ENCODE measurements at regions of chr22 and their contacts with region 1.

Region 1: GRCh38 chr22:32528984-32529982 is 54.7 kb downstream of the FBXO7 start:
- DNase-seq: peak; percentile 76
- H3K4me3 Mint-ChIP-seq: no peak overlapping the region
- H3K27ac Mint-ChIP-seq: no peak overlapping the region
- H3K4me1 Mint-ChIP-seq: peaks cover 26% of the 10 kb centered on the region
- H3K27me3 Mint-ChIP-seq: no peaks in the 10 kb centered on the region
- CTCF ChIP-seq: peak; percentile 85

Region 2: DNA sequence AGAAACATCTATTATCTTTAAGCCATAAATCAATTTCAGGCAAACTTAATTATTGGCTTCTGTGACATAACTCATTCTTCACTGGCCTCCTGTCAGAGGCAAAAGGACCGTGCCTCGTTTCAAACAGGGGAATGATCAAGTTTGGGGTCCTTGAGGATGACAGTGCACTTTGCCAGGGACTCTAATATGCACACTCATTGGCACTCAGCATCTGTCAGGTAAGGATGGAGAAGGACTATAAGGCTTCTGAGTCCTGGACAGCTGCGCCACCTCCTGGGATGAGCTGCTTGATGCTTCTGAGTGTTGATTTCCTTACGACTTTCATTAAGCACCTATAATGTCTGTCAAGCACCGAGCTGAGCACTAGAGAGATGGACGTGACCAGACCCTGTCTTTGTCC is 85.2 kb before region 1 on chr22:
- CTCF ChIA-PET with region 1: no interaction called
- POLR2A ChIA-PET with region 1: no interaction called
- intact Hi-C with region 1: no loop called
- DNase-seq: peak; percentile 25
- H3K4me3 Mint-ChIP-seq: no peak overlapping the region
- H3K27ac Mint-ChIP-seq: no peak overlapping the region
- H3K4me1 Mint-ChIP-seq: peaks cover 4% of the 10 kb centered on the region
- H3K27me3 Mint-ChIP-seq: no peaks in the 10 kb centered on the region
- CTCF ChIP-seq: peak; percentile 31

Region 3: GRCh38 chr22:32501836-32502745 is 27.2 kb before region 1 on chr22:
- CTCF ChIA-PET with region 1: no interaction called
- POLR2A ChIA-PET with region 1: no interaction called
- intact Hi-C with region 1: no loop called
- DNase-seq: no peak
- H3K4me3 Mint-ChIP-seq: no peak overlapping the region
- H3K27ac Mint-ChIP-seq: no peak overlapping the region
- H3K4me1 Mint-ChIP-seq: no peaks in the 10 kb centered on the region
- H3K27me3 Mint-ChIP-seq: no peaks in the 10 kb centered on the region
- CTCF ChIP-seq: no peak

Region 4: GRCh38 chr22:32518848-32519247 is 10.4 kb before region 1 on chr22:
- CTCF ChIA-PET with region 1: interaction called, 30 read pairs
- POLR2A ChIA-PET with region 1: no interaction called
- intact Hi-C with region 1: no loop called
- DNase-seq: peak; percentile 18
- H3K4me3 Mint-ChIP-seq: no peak overlapping the region
- H3K27ac Mint-ChIP-seq: no peak overlapping the region
- H3K4me1 Mint-ChIP-seq: no peaks in the 10 kb centered on the region
- H3K27me3 Mint-ChIP-seq: no peaks in the 10 kb centered on the region
- CTCF ChIP-seq: no peak

Region 5: DNA sequence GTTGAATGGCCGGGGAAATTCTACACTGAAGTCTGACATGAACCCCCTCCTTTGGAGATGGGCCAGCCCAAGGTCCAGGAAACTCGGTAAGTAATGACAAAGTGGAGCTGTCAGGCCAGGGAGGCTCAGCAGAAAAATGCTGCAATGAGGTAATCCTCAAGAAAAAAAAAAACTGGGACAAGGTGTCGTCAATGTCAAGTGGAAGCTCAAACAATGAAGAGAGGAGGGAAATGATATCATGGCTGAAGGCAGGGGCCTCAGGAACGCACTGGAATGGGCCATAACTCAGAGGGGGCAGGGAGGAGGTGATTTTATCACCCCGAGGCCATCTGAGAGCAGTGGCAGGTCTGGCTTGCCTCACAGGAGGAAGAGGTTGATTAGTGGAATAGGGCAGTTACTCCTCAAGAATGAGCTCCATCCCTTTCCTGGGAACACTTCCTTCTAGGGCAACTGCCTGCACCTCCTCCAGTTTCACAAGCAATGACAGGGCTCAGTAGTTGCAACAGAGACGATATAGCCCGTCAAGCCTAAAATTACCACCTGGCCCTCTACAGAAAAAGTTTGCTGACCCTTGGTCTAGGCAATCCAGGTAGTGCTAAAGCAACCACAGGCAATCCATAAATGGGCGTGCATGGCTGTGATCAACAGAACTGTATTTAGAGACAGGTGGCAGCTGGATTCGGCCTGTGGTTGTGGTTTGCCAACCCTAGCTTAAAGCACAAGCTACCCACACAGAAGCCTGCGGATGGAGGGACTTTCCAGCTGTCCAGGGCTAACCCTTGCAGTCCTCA is 10.5 kb after region 1 on chr22:
- CTCF ChIA-PET with region 1: interaction called, 12 read pairs
- POLR2A ChIA-PET with region 1: no interaction called
- intact Hi-C with region 1: no loop called
- DNase-seq: no peak
- H3K4me3 Mint-ChIP-seq: no peak overlapping the region
- H3K27ac Mint-ChIP-seq: no peak overlapping the region
- H3K4me1 Mint-ChIP-seq: peaks cover 6% of the 10 kb centered on the region
- H3K27me3 Mint-ChIP-seq: no peaks in the 10 kb centered on the region
- CTCF ChIP-seq: no peak

Region 6: DNA sequence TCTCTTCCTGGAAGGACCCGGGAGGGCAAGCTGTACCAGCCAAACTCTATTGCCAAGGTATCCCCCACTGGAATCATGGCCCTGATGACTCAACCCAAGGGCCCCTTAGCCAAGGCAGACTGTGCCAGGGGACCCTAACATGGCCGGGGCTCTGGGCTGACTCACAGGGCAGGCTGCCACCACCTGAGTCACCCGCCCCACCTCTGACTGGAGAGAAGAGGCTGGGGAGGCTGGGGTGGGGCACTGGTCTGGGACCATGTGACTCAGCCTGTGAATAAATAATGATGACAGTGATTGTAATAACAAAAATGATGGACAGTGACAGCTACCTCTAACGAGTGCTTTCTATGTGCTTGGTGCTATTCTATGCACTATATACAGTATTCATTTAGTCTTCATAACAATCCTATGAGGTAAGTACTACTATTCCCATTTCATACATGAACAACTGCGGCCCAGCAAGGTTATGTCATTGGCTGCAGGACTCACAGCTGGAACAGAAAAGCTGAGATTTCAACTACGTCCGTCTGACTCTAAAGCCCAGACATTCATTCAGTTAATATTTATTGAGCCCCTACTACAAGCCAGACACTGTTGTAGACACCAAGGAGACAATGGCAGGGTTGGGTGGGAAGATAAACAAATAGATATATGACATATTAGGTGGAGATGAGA is 29.5 kb after region 1 on chr22:
- CTCF ChIA-PET with region 1: interaction called, 10 read pairs
- POLR2A ChIA-PET with region 1: no interaction called
- intact Hi-C with region 1: no loop called
- DNase-seq: peak; percentile 95
- H3K4me3 Mint-ChIP-seq: no peak overlapping the region
- H3K27ac Mint-ChIP-seq: peak overlapping the region; percentile 75
- H3K4me1 Mint-ChIP-seq: peaks cover 40% of the 10 kb centered on the region
- H3K27me3 Mint-ChIP-seq: no peaks in the 10 kb centered on the region
- CTCF ChIP-seq: no peak

Region 7: GRCh38 chr22:32660292-32660691 is 131.0 kb after region 1 on chr22:
- CTCF ChIA-PET with region 1: interaction called, 20 read pairs
- POLR2A ChIA-PET with region 1: no interaction called
- intact Hi-C with region 1: loop called (anchors 1 kb)
- DNase-seq: peak; percentile 71
- H3K4me3 Mint-ChIP-seq: no peak overlapping the region
- H3K27ac Mint-ChIP-seq: no peak overlapping the region
- H3K4me1 Mint-ChIP-seq: peaks cover 7% of the 10 kb centered on the region
- H3K27me3 Mint-ChIP-seq: no peaks in the 10 kb centered on the region
- CTCF ChIP-seq: peak; percentile 93

Region 8: GRCh38 chr22:33000342-33001280 is 471.3 kb after region 1 on chr22:
- CTCF ChIA-PET with region 1: interaction called, 123 read pairs
- POLR2A ChIA-PET with region 1: interaction called, 4 read pairs
- intact Hi-C with region 1: loop called (anchors 1 kb)
- DNase-seq: peak; percentile 65
- H3K4me3 Mint-ChIP-seq: no peak overlapping the region
- H3K27ac Mint-ChIP-seq: peak overlapping the region; percentile 99
- H3K4me1 Mint-ChIP-seq: peaks cover 53% of the 10 kb centered on the region
- H3K27me3 Mint-ChIP-seq: no peaks in the 10 kb centered on the region
- CTCF ChIP-seq: peak; percentile 90

Region 9: DNA sequence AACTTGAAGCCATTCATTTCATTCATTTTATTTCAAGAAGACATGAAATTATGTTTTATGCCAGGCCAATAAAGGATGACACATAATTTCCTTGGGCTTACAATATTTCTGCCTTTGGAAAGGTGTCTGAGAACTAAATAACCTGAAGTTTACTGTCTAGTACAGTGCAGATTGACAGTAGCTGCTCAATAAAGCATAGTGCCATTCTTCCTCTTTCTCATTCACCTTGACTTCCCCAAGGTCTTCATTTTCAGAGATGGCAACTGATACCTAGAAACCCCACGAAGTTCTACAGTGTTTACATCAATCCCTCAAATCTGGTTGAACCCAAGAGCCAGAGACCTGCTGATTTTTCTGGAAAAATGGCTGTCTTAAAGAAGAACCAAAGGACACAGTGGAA is 673.2 kb after region 1 on chr22:
- CTCF ChIA-PET with region 1: interaction called, 11 read pairs
- POLR2A ChIA-PET with region 1: no interaction called
- intact Hi-C with region 1: loop called (anchors 1 kb)
- DNase-seq: no peak
- H3K4me3 Mint-ChIP-seq: no peak overlapping the region
- H3K27ac Mint-ChIP-seq: no peak overlapping the region
- H3K4me1 Mint-ChIP-seq: peaks cover 9% of the 10 kb centered on the region
- H3K27me3 Mint-ChIP-seq: peaks cover 43% of the 10 kb centered on the region
- CTCF ChIP-seq: no peak